CD4-positive, alpha-beta memory T cell (primary cell): ENCODE measurements at regions of chr2 and their contacts with region 1.

Region 1: GRCh38 chr2:203878063-203878462 is 10.5 kb downstream of the CTLA4 start:
- DNase-seq: no peak
- H3K4me3 ChIP-seq: no peak overlapping the region
- H3K4me3 Mint-ChIP-seq: no peak overlapping the region
- H3K27ac ChIP-seq: no peak overlapping the region
- H3K27ac Mint-ChIP-seq: peak overlapping the region in 2 of 7 donors; percentile 31 to 89
- H3K4me1 ChIP-seq: peaks cover 56% of the 10 kb centered on the region
- H3K4me1 Mint-ChIP-seq: peaks cover 17 to 40% (median 32%) of the 10 kb centered on the region in 4 donors
- H3K27me3 ChIP-seq: no peaks in the 10 kb centered on the region
- H3K27me3 Mint-ChIP-seq: no peaks in the 10 kb centered on the region

Region 2: GRCh38 chr2:203858176-203858575 is 19.9 kb before region 1 on chr2:
- CTCF ChIA-PET with region 1: interaction called, 58 read pairs
- POLR2A ChIA-PET with region 1: interaction called, 213 read pairs
- intact Hi-C with region 1: no loop called
- DNase-seq: peak in 1 of 5 donors; percentile 38
- H3K4me3 ChIP-seq: no peak overlapping the region
- H3K4me3 Mint-ChIP-seq: peak overlapping the region in 4 of 8 donors; percentile 2 to 47 (median 22)
- H3K27ac ChIP-seq: no peak overlapping the region
- H3K27ac Mint-ChIP-seq: peak overlapping the region in 5 of 7 donors; percentile 6 to 57 (median 36)
- H3K4me1 ChIP-seq: peaks cover 71% of the 10 kb centered on the region
- H3K4me1 Mint-ChIP-seq: peaks cover 49 to 75% (median 52%) of the 10 kb centered on the region in 4 donors
- H3K27me3 ChIP-seq: no peaks in the 10 kb centered on the region
- H3K27me3 Mint-ChIP-seq: no peaks in the 10 kb centered on the region